ENCODE measurements at regions of chr5 and their contacts with region 1.

Region 1: GRCh38 chr5:143124593-143124992 is 278.9 kb downstream of the NR3C1 start:
- DNase-seq: peak; percentile 77
- ATAC-seq: peak; percentile 68
- H3K4me3 ChIP-seq: no peak overlapping the region
- H3K27ac ChIP-seq: no peak overlapping the region; the same call in 1 of the 2 replicates
- H3K4me1 ChIP-seq: peaks cover 8% of the 10 kb centered on the region
- H3K27me3 ChIP-seq: no peaks in the 10 kb centered on the region
- CTCF ChIP-seq: no peak
- EP300 ChIP-seq: no peak
- POLR2A ChIP-seq: no peak
- RAD21 ChIP-seq: no peak

Region 2: GRCh38 chr5:143106174-143106573 is 18.4 kb before region 1 on chr5:
- CTCF ChIA-PET with region 1: interaction called, 21 read pairs
- POLR2A ChIA-PET with region 1: interaction called, 4 read pairs
- RAD21 ChIA-PET with region 1: interaction called, 8 read pairs
- SMC1A ChIA-PET with region 1: interaction called, 271 read pairs
- in situ Hi-C with region 1: no loop called
- intact Hi-C with region 1: no loop called
- DNase-seq: no peak
- ATAC-seq: no peak
- H3K4me3 ChIP-seq: no peak overlapping the region
- H3K27ac ChIP-seq: no peak overlapping the region
- H3K4me1 ChIP-seq: peaks cover 9% of the 10 kb centered on the region
- H3K27me3 ChIP-seq: no peaks in the 10 kb centered on the region
- CTCF ChIP-seq: no peak
- EP300 ChIP-seq: no peak
- POLR2A ChIP-seq: no peak
- RAD21 ChIP-seq: no peak

Region 3: GRCh38 chr5:143134900-143135299 is 10.3 kb after region 1 on chr5:
- CTCF ChIA-PET with region 1: interaction called, 14 read pairs
- POLR2A ChIA-PET with region 1: interaction called, 17 read pairs
- RAD21 ChIA-PET with region 1: interaction called, 6 read pairs
- SMC1A ChIA-PET with region 1: interaction called, 39 read pairs
- in situ Hi-C with region 1: no loop called
- intact Hi-C with region 1: no loop called
- DNase-seq: no peak
- ATAC-seq: peak; percentile 83
- H3K4me3 ChIP-seq: no peak overlapping the region
- H3K27ac ChIP-seq: no peak overlapping the region
- H3K4me1 ChIP-seq: no peaks in the 10 kb centered on the region
- H3K27me3 ChIP-seq: no peaks in the 10 kb centered on the region
- CTCF ChIP-seq: no peak
- EP300 ChIP-seq: no peak
- POLR2A ChIP-seq: no peak
- RAD21 ChIP-seq: no peak

Region 4: GRCh38 chr5:143153332-143154119 is 28.9 kb after region 1 on chr5:
- CTCF ChIA-PET with region 1: interaction called, 3 read pairs
- POLR2A ChIA-PET with region 1: no interaction called
- RAD21 ChIA-PET with region 1: no interaction called
- SMC1A ChIA-PET with region 1: interaction called, 49 read pairs
- in situ Hi-C with region 1: no loop called
- intact Hi-C with region 1: no loop called
- DNase-seq: no peak
- ATAC-seq: peak; percentile 54
- H3K4me3 ChIP-seq: no peak overlapping the region
- H3K27ac ChIP-seq: no peak overlapping the region
- H3K4me1 ChIP-seq: no peaks in the 10 kb centered on the region
- H3K27me3 ChIP-seq: no peaks in the 10 kb centered on the region
- CTCF ChIP-seq: no peak
- EP300 ChIP-seq: no peak
- POLR2A ChIP-seq: no peak
- RAD21 ChIP-seq: no peak

Region 5: DNA sequence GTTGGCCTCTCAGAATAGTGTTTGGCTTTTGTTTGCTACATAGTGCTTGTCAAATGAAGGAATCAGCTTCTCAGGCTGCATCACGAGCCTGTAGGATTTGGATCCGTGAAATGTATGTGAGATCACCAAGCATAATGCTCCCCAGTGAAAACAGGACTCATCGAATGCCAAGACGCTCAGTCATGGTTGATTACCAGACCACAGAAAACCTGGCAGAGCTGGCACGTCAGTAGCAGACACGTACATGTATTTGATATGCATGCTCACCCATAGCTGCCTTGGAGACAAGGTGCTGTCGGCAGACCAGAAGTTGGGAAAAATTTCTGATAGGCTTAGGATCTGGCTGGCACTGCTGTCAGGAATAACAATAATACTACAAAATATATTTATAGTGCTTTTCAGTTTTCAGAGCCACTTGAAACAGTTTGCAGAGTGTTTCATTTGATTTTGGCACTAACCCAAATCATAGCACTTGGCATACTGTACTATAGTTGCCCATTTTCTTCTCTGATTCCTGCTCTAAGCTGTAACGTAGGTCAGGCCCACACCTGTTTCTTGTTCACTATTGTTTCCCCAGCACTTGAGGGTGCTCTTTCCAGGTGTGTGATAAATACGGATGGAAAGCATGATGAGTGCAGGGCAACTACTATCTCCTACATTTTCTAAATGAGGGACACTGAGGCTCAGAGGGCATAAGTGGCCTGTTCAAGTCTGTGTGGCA is 52.8 kb after region 1 on chr5:
- CTCF ChIA-PET with region 1: interaction called, 4 read pairs
- POLR2A ChIA-PET with region 1: interaction called, 3 read pairs
- RAD21 ChIA-PET with region 1: interaction called, 16 read pairs
- SMC1A ChIA-PET with region 1: interaction called, 18 read pairs
- in situ Hi-C with region 1: no loop called
- intact Hi-C with region 1: no loop called
- DNase-seq: no peak
- ATAC-seq: no peak
- H3K4me3 ChIP-seq: no peak overlapping the region
- H3K27ac ChIP-seq: no peak overlapping the region
- H3K4me1 ChIP-seq: peaks cover 8% of the 10 kb centered on the region
- H3K27me3 ChIP-seq: no peaks in the 10 kb centered on the region
- CTCF ChIP-seq: no peak
- EP300 ChIP-seq: no peak
- POLR2A ChIP-seq: no peak
- RAD21 ChIP-seq: no peak

Measured in GM12878 (cell line).